GM10248 (cell line): ENCODE measurements at regions of chr4 and their contacts with region 1.

Region 1: GRCh38 chr4:81898862-81899504 is 427.3 kb upstream of the RASGEF1B start:
- DNase-seq: no peak
- CTCF ChIP-seq: no peak

Region 2: GRCh38 chr4:81913427-81913879 is 14.5 kb after region 1 on chr4:
- CTCF ChIA-PET with region 1: interaction called, 50 read pairs
- POLR2A ChIA-PET with region 1: no interaction called
- DNase-seq: peak; percentile 53
- CTCF ChIP-seq: peak; percentile 57